Motor neuron (in vitro differentiated cells): ENCODE measurements at regions of chr9 and their contacts with region 1.

Region 1: DNA sequence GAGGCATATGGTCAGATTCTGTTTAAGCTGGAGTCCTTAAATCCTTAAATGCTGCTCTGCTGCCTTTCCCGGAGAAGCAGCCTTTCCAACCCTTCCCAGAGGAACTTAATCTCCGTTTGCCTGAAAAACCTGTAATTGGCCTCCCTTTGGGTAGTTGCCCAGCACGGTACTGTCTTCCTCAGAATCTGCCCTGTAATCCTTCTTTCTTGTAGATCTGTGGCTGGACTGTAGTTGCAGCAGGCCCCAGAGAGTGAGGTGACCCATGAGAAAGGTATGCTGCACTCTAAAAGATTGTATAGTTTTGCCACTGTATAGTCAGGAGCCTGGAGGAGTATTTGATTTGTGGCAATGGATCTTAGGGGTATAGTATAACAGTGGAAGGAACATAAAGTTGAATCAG is 11.7 kb downstream of the SPIN1 start:
- ATAC-seq: peak in 3 of 8 experiments; percentile 36 to 53 (median 50)
- H3K4me3 ChIP-seq: no peak overlapping the region
- H3K27ac ChIP-seq: no peak overlapping the region
- H3K4me1 ChIP-seq: no peaks in the 10 kb centered on the region

Region 2: DNA sequence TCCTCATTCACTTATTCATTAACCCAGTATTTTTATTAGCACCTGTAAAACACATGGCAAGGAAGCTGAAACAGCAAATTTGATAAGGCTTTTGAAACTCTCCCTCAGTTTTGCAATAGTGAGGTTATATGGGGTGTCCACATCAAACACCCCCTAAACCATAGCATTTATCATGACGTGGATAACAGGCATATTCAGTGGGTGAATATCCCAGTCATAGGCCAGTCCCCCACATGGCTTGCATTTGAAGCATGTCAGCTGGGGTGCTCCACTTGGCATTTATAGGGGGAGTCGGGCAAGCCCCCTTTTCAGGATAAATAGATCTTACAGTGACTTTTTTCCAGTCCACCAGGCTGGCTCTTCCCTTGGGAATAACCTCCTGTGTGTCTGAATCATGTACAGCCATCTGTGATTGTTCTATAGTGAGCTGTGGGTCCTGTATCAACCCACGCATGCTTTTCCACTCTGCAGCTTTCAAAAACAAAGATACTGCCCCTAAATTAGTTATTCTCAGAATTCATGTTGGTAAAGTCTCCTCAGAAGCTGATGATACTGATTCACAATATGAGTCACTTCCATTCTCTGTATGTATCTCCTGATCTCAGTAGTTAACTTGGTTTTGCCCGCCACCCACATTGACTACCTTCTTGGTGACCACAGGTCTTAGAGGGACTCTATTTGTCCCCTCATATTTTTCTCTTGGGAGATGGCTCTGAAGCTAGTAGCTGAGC is 96.1 kb before region 1 on chr9:
- in situ Hi-C with region 1: loop called in 1 of 9 experiments (anchors 25 kb)
- ATAC-seq: peak in 5 of 8 experiments; percentile 23 to 56 (median 50)
- H3K4me3 ChIP-seq: no peak overlapping the region
- H3K27ac ChIP-seq: no peak overlapping the region
- H3K4me1 ChIP-seq: peaks cover 0 to 4% of the 10 kb centered on the region in 2 donors